ENCODE measurements at regions of chr17 and their contacts with region 1.

Region 1: GRCh38 chr17:75515496-75516254 is at the start of gene CASKIN2:
- DNase-seq: peak; percentile 90
- ATAC-seq: peak; percentile 67
- H3K4me3 ChIP-seq: peak within 1 kb of the TSS; percentile 38 to 96 (median 63)
- H3K4me3 Mint-ChIP-seq: peak within 1 kb of the TSS; percentile 78
- H3K27ac ChIP-seq: no peak within 1 kb of the TSS
- H3K27ac Mint-ChIP-seq: peak within 1 kb of the TSS; percentile 32
- H3K4me1 ChIP-seq: peaks cover 26 to 39% of the 10 kb centered on the region in 2 donors
- H3K4me1 Mint-ChIP-seq: peaks cover 19% of the 10 kb centered on the region
- H3K27me3 ChIP-seq: no peaks in the 10 kb centered on the region
- H3K27me3 Mint-ChIP-seq: no peaks in the 10 kb centered on the region
- CTCF ChIP-seq: peak; percentile 94
- total RNA-seq, gene CASKIN2: 0.37 and 0.97 TPM in 2 replicates

Region 2: DNA sequence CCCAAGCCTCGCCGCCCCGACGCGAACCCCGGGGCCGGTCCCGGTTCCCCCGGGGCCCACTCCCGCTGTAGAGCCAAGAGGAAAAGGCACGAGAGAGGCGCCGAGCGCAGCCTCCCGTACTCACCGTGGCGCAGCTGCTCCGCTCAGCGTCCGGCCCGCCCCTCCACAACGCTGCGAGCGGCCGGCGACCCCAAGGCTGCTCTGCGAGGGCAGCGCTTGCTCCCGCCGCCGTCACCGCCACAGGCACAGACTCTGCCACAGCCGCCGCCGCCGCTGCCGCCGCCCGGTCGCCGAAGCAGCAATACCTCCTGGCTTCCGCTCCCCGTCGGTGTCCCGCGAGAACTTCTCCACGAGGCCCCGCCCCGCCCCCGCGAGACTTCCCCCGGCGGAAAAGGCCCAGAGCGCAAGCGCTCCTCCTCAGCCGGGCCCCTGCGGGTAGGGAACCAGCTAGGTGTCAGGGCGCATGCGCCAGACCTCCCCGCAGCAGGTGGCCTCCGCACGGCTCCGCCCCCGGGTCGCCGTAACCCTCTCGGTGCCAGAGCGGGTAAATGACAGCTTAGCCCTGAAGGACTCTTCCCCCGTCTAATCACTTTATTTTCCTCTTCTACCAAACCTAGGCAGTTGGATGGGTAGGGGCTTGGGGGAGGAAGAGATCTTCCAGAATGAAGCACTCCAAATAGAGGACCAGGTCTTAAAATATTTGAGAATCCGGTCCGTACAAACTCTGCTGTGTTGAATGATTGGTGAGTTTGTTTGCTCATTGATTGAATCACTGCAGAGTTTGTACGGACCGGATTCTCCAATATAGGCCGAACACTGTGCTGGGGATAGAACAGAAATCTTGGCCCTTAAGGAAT is 110.1 kb before region 1 on chr17 and contains the start of gene GRB2:
- CTCF ChIA-PET with region 1: no interaction called
- POLR2A ChIA-PET with region 1: interaction called, 4 read pairs
- intact Hi-C with region 1: loop called (anchors 5 kb)
- DNase-seq: peak; percentile 98
- ATAC-seq: peak; percentile 89
- H3K4me3 ChIP-seq: peak within 1 kb of the TSS; percentile 91 to 99 (median 99)
- H3K4me3 Mint-ChIP-seq: peak within 1 kb of the TSS; percentile 98
- H3K27ac ChIP-seq: peak within 1 kb of the TSS; percentile 79 to 92
- H3K27ac Mint-ChIP-seq: peak within 1 kb of the TSS; percentile 97
- H3K4me1 ChIP-seq: peaks cover 32 to 43% of the 10 kb centered on the region in 2 donors
- H3K4me1 Mint-ChIP-seq: peaks cover 39% of the 10 kb centered on the region
- H3K27me3 ChIP-seq: no peaks in the 10 kb centered on the region
- H3K27me3 Mint-ChIP-seq: no peaks in the 10 kb centered on the region
- CTCF ChIP-seq: no peak
- total RNA-seq, gene GRB2: 219 and 224 TPM in 2 replicates

Region 3: DNA sequence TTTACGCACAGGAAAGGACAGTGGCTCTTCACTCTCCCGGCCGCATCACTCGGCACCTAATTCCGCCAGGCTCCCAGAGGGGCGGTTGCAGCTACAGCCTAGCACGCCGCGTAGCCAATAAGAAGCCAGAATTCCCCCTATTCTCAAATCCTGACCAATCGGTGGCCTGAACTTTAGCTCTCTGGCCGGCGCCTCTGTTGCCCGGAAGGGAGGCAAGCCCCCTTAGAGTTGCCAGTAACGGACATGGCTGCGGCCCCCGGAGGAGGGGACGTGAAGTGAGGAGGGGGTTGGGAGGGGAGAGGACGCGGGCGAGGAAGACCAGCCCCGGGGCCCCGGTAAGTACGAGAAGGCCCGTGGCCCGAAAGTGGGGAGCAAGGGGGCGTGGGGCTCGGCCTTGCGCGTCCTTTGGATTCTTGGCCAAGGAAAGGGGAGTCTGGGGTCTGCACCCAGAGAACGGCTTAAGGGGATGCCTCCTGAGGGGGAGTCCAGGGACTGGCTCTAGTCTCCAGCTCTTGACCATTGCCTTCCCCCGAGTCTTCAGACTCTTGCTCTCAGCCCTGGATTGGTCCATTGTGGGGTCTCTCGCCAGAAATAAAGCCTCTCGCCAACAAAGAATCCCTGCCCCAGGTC is 59.1 kb before region 1 on chr17 and contains the start of gene TMEM94:
- CTCF ChIA-PET with region 1: interaction called, 4 read pairs
- POLR2A ChIA-PET with region 1: interaction called, 7 read pairs
- intact Hi-C with region 1: loop called (anchors 1 kb)
- DNase-seq: peak; percentile 97
- ATAC-seq: peak; percentile 98
- H3K4me3 ChIP-seq: peak within 1 kb of the TSS; percentile 75 to 99 (median 84)
- H3K4me3 Mint-ChIP-seq: peak within 1 kb of the TSS; percentile 96
- H3K27ac ChIP-seq: peak within 1 kb of the TSS; percentile 60 to 79
- H3K27ac Mint-ChIP-seq: peak within 1 kb of the TSS; percentile 88
- H3K4me1 ChIP-seq: peaks cover 14 to 20% of the 10 kb centered on the region in 2 donors
- H3K4me1 Mint-ChIP-seq: peaks cover 42% of the 10 kb centered on the region
- H3K27me3 ChIP-seq: no peaks in the 10 kb centered on the region
- H3K27me3 Mint-ChIP-seq: no peaks in the 10 kb centered on the region
- CTCF ChIP-seq: no peak
- total RNA-seq, gene TMEM94: 112 and 139 TPM in 2 replicates

Region 4: DNA sequence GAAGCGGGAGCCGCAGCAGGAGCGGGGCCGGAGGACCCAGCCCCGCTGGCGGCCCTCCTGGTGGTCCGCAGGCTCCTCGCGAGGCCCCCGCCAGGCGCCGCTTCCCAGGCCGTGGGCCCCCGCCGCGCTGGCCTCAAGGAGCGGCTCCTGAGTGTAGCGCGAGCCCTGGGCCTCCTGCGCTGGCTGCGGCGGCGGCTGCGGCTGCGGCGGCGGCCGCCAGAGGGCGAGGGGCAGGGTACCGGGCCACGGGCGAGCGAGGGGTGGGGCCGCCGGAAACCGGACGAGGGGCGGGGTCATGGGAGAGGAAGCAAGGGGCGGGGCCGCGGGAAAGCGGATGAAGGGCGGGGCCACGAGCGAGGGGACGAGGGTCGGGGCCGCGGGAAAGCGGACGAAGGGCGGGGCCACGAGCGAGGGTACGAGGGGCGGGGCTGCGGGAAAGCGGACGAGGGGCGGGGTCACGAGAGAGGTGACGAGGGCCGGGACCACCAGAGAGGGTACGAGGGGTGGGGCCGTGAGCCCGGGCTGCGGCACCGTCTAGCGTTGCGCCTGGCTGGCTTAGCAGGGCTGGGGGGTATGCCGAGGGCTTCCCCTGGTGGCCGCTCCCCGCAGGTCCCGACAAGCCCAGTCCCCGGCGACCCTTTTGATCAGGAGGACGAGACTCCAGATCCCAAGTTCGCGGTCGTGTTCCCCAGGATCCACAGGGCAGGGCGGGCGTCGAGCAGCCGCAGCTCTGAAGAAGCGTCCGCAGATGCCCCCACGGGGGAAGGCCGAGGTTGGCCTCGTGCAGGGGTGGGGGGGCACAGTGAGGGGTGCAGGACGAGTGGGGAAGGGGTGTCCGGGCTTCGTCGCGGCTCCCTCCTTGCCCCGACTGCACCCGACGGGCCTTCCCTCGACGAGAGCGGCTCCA is 73.6 kb after region 1 on chr17:
- CTCF ChIA-PET with region 1: interaction called, 12 read pairs
- POLR2A ChIA-PET with region 1: interaction called, 6 read pairs
- intact Hi-C with region 1: loop called (anchors 1 kb)
- DNase-seq: peak; percentile 95
- ATAC-seq: peak; percentile 84
- H3K4me3 ChIP-seq: peak overlapping the region in 4 of 5 experiments; percentile 80 to 95 (median 84)
- H3K4me3 Mint-ChIP-seq: peak overlapping the region; percentile 86
- H3K27ac ChIP-seq: peak overlapping the region; percentile 80 to 89
- H3K27ac Mint-ChIP-seq: peak overlapping the region; percentile 81
- H3K4me1 ChIP-seq: peaks cover 4 to 20% of the 10 kb centered on the region in 2 donors
- H3K4me1 Mint-ChIP-seq: peaks cover 19% of the 10 kb centered on the region
- H3K27me3 ChIP-seq: no peaks in the 10 kb centered on the region
- H3K27me3 Mint-ChIP-seq: no peaks in the 10 kb centered on the region
- CTCF ChIP-seq: peak; percentile 59

Region 5: GRCh38 chr17:75877752-75878173 is 362.1 kb after region 1 on chr17:
- CTCF ChIA-PET with region 1: no interaction called
- POLR2A ChIA-PET with region 1: no interaction called
- intact Hi-C with region 1: no loop called
- DNase-seq: peak; percentile 87
- ATAC-seq: peak; percentile 77
- H3K4me3 ChIP-seq: peak overlapping the region in 4 of 5 experiments; percentile 46 to 69 (median 52)
- H3K4me3 Mint-ChIP-seq: peak overlapping the region; percentile 90
- H3K27ac ChIP-seq: peak overlapping the region; percentile 44 to 55
- H3K27ac Mint-ChIP-seq: peak overlapping the region; percentile 91
- H3K4me1 ChIP-seq: peaks cover 30 to 39% of the 10 kb centered on the region in 2 donors
- H3K4me1 Mint-ChIP-seq: peaks cover 35% of the 10 kb centered on the region
- H3K27me3 ChIP-seq: peaks cover 0 to 7% (median 1%) of the 10 kb centered on the region in 4 experiments
- H3K27me3 Mint-ChIP-seq: peaks cover 4% of the 10 kb centered on the region
- CTCF ChIP-seq: peak; percentile 73

Region 6: GRCh38 chr17:76737082-76737675 is 1221.5 kb after region 1 on chr17 and contains the start of gene SRSF2:
- CTCF ChIA-PET with region 1: no interaction called
- POLR2A ChIA-PET with region 1: no interaction called
- intact Hi-C with region 1: loop called (anchors 5 kb)
- DNase-seq: peak; percentile 99
- ATAC-seq: peak; percentile 76
- H3K4me3 ChIP-seq: peak within 1 kb of the TSS; percentile 95 to 99 (median 97)
- H3K4me3 Mint-ChIP-seq: peak within 1 kb of the TSS; percentile 97
- H3K27ac ChIP-seq: peak within 1 kb of the TSS; percentile 95 to 97
- H3K27ac Mint-ChIP-seq: peak within 1 kb of the TSS; percentile 99
- H3K4me1 ChIP-seq: peaks cover 35 to 36% of the 10 kb centered on the region in 2 donors
- H3K4me1 Mint-ChIP-seq: peaks cover 53% of the 10 kb centered on the region
- H3K27me3 ChIP-seq: no peaks in the 10 kb centered on the region
- H3K27me3 Mint-ChIP-seq: no peaks in the 10 kb centered on the region
- CTCF ChIP-seq: no peak
- total RNA-seq, gene SRSF2: 356 and 362 TPM in 2 replicates

Measured in B cell (primary cell).